MCF 10A (cell line): ENCODE measurements at regions of chr10 and their contacts with region 1.

Region 1: GRCh38 chr10:30384701-30385201 is 35.7 kb upstream of the MTPAP start:
- DNase-seq: peak; percentile 76
- H3K4me3 Mint-ChIP-seq: no peak overlapping the region
- H3K27ac Mint-ChIP-seq: no peak overlapping the region
- H3K4me1 Mint-ChIP-seq: peaks cover 26% of the 10 kb centered on the region
- H3K27me3 Mint-ChIP-seq: peaks cover 15% of the 10 kb centered on the region
- CTCF ChIP-seq: peak; percentile 46

Region 2: GRCh38 chr10:29050081-29050480 is 1334.7 kb before region 1 on chr10:
- CTCF ChIA-PET with region 1: no interaction called
- POLR2A ChIA-PET with region 1: no interaction called
- intact Hi-C with region 1: no loop called
- DNase-seq: no peak
- H3K4me3 Mint-ChIP-seq: no peak overlapping the region
- H3K27ac Mint-ChIP-seq: no peak overlapping the region
- H3K4me1 Mint-ChIP-seq: no peaks in the 10 kb centered on the region
- H3K27me3 Mint-ChIP-seq: peaks cover 39% of the 10 kb centered on the region
- CTCF ChIP-seq: no peak

Region 3: GRCh38 chr10:30247704-30248103 is 137.0 kb before region 1 on chr10:
- CTCF ChIA-PET with region 1: no interaction called
- POLR2A ChIA-PET with region 1: no interaction called
- intact Hi-C with region 1: no loop called
- DNase-seq: no peak
- H3K4me3 Mint-ChIP-seq: no peak overlapping the region
- H3K27ac Mint-ChIP-seq: no peak overlapping the region
- H3K4me1 Mint-ChIP-seq: no peaks in the 10 kb centered on the region
- H3K27me3 Mint-ChIP-seq: no peaks in the 10 kb centered on the region
- CTCF ChIP-seq: no peak

Region 4: GRCh38 chr10:30270247-30270646 is 114.5 kb before region 1 on chr10:
- CTCF ChIA-PET with region 1: interaction called, 3 read pairs
- POLR2A ChIA-PET with region 1: no interaction called
- intact Hi-C with region 1: loop called (anchors 2 kb)
- DNase-seq: no peak
- H3K4me3 Mint-ChIP-seq: no peak overlapping the region
- H3K27ac Mint-ChIP-seq: no peak overlapping the region
- H3K4me1 Mint-ChIP-seq: no peaks in the 10 kb centered on the region
- H3K27me3 Mint-ChIP-seq: peaks cover 56% of the 10 kb centered on the region
- CTCF ChIP-seq: no peak

Region 5: DNA sequence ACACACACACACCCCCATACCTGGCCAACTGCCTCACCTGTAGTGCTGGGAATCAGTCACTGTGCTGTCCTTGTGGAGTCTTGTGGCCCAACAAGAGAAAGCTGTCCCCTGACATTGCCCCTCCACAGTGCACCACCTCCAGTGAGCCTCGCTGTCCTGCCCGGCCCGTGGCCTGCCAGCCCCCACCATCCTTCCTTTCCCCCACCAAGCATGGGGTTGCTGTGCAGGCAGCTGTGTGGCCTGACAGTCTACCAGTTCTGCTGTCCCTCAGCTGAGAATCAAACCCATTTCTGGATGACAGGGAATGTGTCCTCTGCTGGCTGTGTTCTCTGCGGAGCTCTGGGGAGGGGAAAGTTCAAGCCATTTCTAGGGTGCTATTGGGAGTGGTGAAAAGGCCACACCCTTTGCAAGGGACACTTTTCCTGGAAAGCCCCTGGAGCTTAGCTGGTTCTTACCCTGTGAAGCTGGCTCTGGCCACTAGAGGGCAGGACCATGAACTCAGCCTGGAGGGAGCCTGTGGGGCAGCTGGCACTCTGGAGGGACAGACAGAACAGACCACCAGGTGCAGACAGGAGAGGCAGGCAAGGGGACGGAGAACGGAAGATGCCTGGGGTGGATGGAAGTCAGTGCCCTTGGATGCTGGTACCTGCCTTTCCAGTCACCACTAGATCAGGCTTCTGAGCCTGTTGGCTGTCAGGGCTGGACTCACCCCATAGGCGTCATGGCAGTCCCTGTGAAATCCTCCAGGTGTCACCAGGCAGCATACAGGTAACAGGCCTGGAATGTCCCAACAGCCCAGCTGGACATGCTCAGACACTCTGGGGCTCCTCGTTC is 25.2 kb before region 1 on chr10:
- CTCF ChIA-PET with region 1: interaction called, 11 read pairs
- POLR2A ChIA-PET with region 1: interaction called, 3 read pairs
- intact Hi-C with region 1: loop called (anchors 1 kb)
- DNase-seq: peak; percentile 75
- H3K4me3 Mint-ChIP-seq: no peak overlapping the region
- H3K27ac Mint-ChIP-seq: no peak overlapping the region
- H3K4me1 Mint-ChIP-seq: peaks cover 20% of the 10 kb centered on the region
- H3K27me3 Mint-ChIP-seq: peaks cover 23% of the 10 kb centered on the region
- CTCF ChIP-seq: peak; percentile 81